H1 (cell line): ENCODE measurements at regions of chr4 and their contacts with region 1.

Region 1: DNA sequence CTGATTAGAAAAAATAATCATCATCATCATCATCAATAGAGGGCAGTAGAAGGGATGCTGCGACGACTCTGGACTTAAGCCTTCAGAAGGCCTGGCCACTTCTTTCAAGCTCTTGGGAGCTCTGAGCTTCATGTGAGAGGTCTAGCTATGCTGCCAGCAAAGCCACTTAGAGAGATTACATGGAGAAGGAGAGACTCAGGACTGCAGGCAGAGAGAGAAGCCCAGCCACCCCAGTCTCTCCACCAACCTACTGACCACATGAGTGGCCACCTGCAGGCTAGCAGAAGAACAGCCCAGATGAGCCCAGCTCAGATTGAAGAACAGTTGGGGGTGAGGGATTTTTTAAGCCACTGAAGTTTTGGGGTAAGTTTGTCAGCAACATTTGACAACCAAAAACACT is 17.1 kb upstream of the TMEM150C start:
- DNase-seq: no peak
- H3K4me3 ChIP-seq: no peak overlapping the region
- H3K27ac ChIP-seq: no peak overlapping the region
- H3K4me1 ChIP-seq: peaks cover 0 to under 1% (median 0%) of the 10 kb centered on the region in 4 experiments; a peak in 2 of 7 replicates
- H3K27me3 ChIP-seq: no peaks in the 10 kb centered on the region
- CTCF ChIP-seq: peak; percentile 39 to 49 (median 44)
- EP300 ChIP-seq: no peak
- POLR2A ChIP-seq: no peak
- RAD21 ChIP-seq: peak in 1 of 2 experiments; percentile 34; a peak in 2 of 4 replicates

Region 2: DNA sequence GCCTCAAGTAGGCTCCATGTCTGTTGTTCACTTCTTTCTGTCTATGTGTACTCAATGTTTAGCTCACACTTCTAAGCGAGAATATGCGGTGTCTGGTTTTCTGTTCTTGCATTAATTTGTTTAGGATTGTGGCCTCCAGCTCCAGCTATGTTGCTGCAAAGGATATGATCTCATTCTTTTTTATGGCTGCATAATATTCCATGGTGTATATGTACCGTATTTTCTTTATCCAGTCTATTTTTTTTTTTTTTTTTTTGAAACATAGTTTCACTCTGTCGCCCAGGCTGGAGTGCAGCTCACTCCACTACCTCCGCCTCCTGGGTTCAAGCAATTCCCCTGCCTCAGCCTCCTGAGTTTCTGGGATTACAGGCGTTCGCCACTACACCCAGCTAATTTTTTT is 11.5 kb before region 1 on chr4:
- CTCF ChIA-PET with region 1: interaction called, 14 read pairs
- POLR2A ChIA-PET with region 1: no interaction called
- DNase-seq: no peak
- H3K4me3 ChIP-seq: no peak overlapping the region
- H3K27ac ChIP-seq: no peak overlapping the region
- H3K4me1 ChIP-seq: peaks cover under 1 to 4% (median 3%) of the 10 kb centered on the region in 4 experiments; a peak in 6 of 7 replicates
- H3K27me3 ChIP-seq: no peaks in the 10 kb centered on the region
- CTCF ChIP-seq: no peak
- EP300 ChIP-seq: no peak
- POLR2A ChIP-seq: no peak
- RAD21 ChIP-seq: no peak

Region 3: GRCh38 chr4:82591592-82591991 is 12.7 kb after region 1 on chr4:
- CTCF ChIA-PET with region 1: interaction called, 17 read pairs
- POLR2A ChIA-PET with region 1: no interaction called
- DNase-seq: no peak
- H3K4me3 ChIP-seq: no peak overlapping the region; a peak in 1 of 8 replicates
- H3K27ac ChIP-seq: no peak overlapping the region
- H3K4me1 ChIP-seq: peaks cover 2 to 14% (median 10%) of the 10 kb centered on the region in 4 experiments
- H3K27me3 ChIP-seq: no peaks in the 10 kb centered on the region
- CTCF ChIP-seq: no peak
- EP300 ChIP-seq: no peak
- POLR2A ChIP-seq: no peak
- RAD21 ChIP-seq: no peak